Right ventricle myocardium inferior (tissue), 1 donor: ENCODE measurements at regions of chr2 and their contacts with region 1.

Region 1: GRCh38 chr2:206558492-206558891 is 83.8 kb upstream of the FAM237A start:
- DNase-seq: no peak
- ATAC-seq: no peak

Region 2: DNA sequence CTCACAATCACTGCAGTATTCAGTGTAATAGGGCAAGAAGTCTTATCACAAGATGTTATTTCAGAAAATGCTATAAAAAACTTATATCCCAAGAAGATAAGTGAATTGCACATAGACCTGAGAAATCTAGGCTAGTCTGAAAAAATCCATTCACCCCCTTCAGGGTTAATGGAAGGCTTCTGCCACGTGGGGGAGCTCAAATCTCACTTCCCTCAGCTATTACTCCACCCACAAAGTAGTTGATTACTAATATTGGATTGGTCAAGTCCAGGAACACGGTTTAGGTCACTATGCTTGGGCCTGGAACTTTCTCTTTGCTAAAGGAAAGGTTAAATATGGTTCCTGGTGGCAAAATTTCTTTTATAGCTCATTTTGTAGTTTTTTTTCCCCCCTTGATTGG is 166.4 kb before region 1 on chr2:
- intact Hi-C with region 1: loop called (anchors 2 kb)
- DNase-seq: no peak
- ATAC-seq: no peak